ENCODE measurements at regions of chr10 and their contacts with region 1.

Region 1: DNA sequence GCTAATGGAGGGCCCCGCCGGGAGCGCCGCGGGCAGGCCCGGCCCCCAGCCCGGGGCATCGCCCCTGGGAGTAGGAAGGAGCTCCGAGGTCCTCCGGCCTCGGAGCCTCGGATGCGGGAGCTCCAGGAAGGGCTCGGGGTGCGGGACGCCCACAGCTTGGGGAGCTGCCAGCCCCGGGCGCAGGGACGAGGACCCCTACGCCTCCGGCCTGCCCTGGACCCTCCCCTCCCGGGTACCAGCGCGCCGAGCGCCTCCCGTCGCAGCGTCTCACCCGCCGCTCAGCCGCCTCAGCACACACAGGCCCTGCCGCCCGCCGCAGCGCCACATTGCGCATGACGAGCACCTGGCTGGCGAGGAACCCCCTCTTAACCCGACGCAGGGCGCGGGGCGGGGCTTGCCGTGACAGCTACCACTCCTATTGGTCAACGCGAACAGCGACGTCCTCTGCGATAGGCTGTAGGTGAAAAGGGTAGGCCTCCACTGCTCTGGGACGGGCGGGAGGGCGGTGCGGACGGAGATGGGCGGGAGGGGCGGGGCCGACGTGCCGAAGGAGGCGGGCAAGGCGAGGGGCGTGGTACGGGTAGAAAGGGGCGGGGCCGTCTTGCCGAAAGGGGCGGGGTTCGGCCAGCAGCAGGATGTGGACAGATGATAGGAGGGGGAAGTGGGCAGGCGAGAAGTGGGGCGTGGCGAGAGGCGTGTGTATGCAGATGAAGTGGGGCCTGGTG is at the start of gene PITRM1:
- DNase-seq: peak; percentile 100
- H3K4me3 ChIP-seq: peak within 1 kb of the TSS; percentile 99
- H3K4me3 Mint-ChIP-seq: peak within 1 kb of the TSS; percentile 79
- H3K27ac Mint-ChIP-seq: peak within 1 kb of the TSS; percentile 81
- H3K4me1 ChIP-seq: peaks cover 5% of the 10 kb centered on the region; the same call in 1 of the 2 replicates
- H3K4me1 Mint-ChIP-seq: peaks cover 8% of the 10 kb centered on the region
- H3K27me3 ChIP-seq: no peaks in the 10 kb centered on the region
- H3K27me3 Mint-ChIP-seq: peaks cover 6% of the 10 kb centered on the region
- CTCF ChIP-seq: no peak
- total RNA-seq, gene PITRM1: 80.5 and 85.4 TPM in 2 replicates

Region 2: DNA sequence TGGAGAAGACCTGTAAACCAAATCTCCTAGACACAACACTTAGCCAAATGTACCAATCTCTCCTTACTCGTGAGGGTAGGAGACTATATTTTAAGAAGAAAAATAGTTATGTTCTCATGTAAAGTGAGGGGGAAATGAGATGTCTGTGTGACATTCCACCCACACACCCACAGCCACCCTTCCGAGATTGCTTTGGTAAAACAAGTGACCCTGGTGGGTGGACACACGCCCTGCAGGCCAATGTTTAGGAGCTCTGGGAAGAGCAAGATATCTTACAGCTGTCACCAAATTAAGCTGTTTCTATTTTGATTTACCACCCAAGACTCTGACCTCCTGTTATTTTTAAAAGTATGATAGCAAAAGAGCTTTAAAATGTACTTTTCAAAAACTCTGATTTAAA is 252.4 kb before region 1 on chr10:
- CTCF ChIA-PET with region 1: no interaction called
- POLR2A ChIA-PET with region 1: interaction called, 15 read pairs
- intact Hi-C with region 1: no loop called
- DNase-seq: no peak
- H3K4me3 ChIP-seq: no peak overlapping the region
- H3K4me3 Mint-ChIP-seq: no peak overlapping the region
- H3K27ac Mint-ChIP-seq: no peak overlapping the region
- H3K4me1 ChIP-seq: no peaks in the 10 kb centered on the region
- H3K4me1 Mint-ChIP-seq: no peaks in the 10 kb centered on the region
- H3K27me3 ChIP-seq: no peaks in the 10 kb centered on the region; the same call in 1 of the 2 replicates
- H3K27me3 Mint-ChIP-seq: peaks cover 21% of the 10 kb centered on the region
- CTCF ChIP-seq: no peak

Region 3: GRCh38 chr10:3068201-3068967 is 104.2 kb before region 1 on chr10:
- CTCF ChIA-PET with region 1: no interaction called
- POLR2A ChIA-PET with region 1: no interaction called
- intact Hi-C with region 1: loop called (anchors 2 kb)
- DNase-seq: peak; percentile 67 to 76
- H3K4me3 ChIP-seq: peak overlapping the region; percentile 97
- H3K4me3 Mint-ChIP-seq: peak overlapping the region; percentile 95
- H3K27ac Mint-ChIP-seq: peak overlapping the region; percentile 64
- H3K4me1 ChIP-seq: peaks cover 31% of the 10 kb centered on the region
- H3K4me1 Mint-ChIP-seq: peaks cover 34% of the 10 kb centered on the region
- H3K27me3 ChIP-seq: no peaks in the 10 kb centered on the region
- H3K27me3 Mint-ChIP-seq: no peaks in the 10 kb centered on the region
- CTCF ChIP-seq: peak; percentile 20 to 41

Region 4: GRCh38 chr10:3095373-3096139 is 77.1 kb before region 1 on chr10:
- CTCF ChIA-PET with region 1: interaction called, 3 read pairs
- POLR2A ChIA-PET with region 1: interaction called, 14 read pairs
- intact Hi-C with region 1: loop called (anchors 1 kb)
- DNase-seq: peak; percentile 78 to 82
- H3K4me3 ChIP-seq: 0 out of 2 replicates have a peak overlapping the region, but pooled peaks have one; percentile 11
- H3K4me3 Mint-ChIP-seq: peak overlapping the region; percentile 63
- H3K27ac Mint-ChIP-seq: peak overlapping the region; percentile 96
- H3K4me1 ChIP-seq: peaks cover 74% of the 10 kb centered on the region
- H3K4me1 Mint-ChIP-seq: peaks cover 56% of the 10 kb centered on the region
- H3K27me3 ChIP-seq: no peaks in the 10 kb centered on the region
- H3K27me3 Mint-ChIP-seq: no peaks in the 10 kb centered on the region
- CTCF ChIP-seq: no peak

Region 5: GRCh38 chr10:3131094-3131493 is 41.5 kb before region 1 on chr10:
- CTCF ChIA-PET with region 1: no interaction called
- POLR2A ChIA-PET with region 1: no interaction called
- intact Hi-C with region 1: loop called (anchors 2 kb)
- DNase-seq: peak; percentile 72 to 79
- H3K4me3 ChIP-seq: no peak overlapping the region
- H3K4me3 Mint-ChIP-seq: no peak overlapping the region
- H3K27ac Mint-ChIP-seq: peak overlapping the region; percentile 75
- H3K4me1 ChIP-seq: peaks cover 12% of the 10 kb centered on the region
- H3K4me1 Mint-ChIP-seq: peaks cover 6% of the 10 kb centered on the region
- H3K27me3 ChIP-seq: no peaks in the 10 kb centered on the region
- H3K27me3 Mint-ChIP-seq: no peaks in the 10 kb centered on the region
- CTCF ChIP-seq: no peak

Region 6: DNA sequence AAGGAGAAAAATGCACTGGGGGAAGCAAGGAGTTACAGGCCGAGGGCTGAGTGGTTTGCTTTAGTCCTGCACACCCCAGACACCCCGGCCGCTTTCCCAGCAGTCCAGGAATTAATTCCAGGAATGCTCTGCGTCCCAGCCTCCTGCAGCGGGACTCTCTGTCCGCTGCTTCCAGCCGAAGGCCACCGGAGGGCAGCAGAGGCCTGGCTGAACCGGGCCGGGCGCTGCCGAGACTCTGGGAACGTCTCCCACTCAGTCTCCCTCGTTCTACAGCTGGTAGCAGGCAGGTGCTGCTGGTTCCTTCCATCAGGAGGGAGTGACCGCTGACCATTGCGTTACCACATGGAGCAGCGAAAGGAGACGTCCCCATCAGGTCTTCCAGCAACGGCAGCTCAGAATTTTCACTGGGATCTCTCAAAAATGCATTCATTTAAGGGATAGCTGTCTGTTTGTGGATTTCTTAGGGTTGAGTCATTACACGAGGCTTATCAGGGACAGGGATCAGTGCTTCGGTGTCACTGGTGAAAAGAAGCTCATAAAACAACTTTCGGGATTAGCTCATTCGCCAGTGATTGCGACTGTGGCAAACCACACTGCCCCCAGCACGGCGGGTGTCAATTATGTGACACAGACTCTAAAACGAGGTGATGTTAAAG is 24.9 kb after region 1 on chr10:
- CTCF ChIA-PET with region 1: interaction called, 9 read pairs
- POLR2A ChIA-PET with region 1: interaction called, 11 read pairs
- intact Hi-C with region 1: no loop called
- DNase-seq: peak; percentile 89 to 92
- H3K4me3 ChIP-seq: peak overlapping the region; percentile 9
- H3K4me3 Mint-ChIP-seq: peak overlapping the region; percentile 75
- H3K27ac Mint-ChIP-seq: peak overlapping the region; percentile 66
- H3K4me1 ChIP-seq: no peaks in the 10 kb centered on the region
- H3K4me1 Mint-ChIP-seq: peaks cover 9% of the 10 kb centered on the region
- H3K27me3 ChIP-seq: no peaks in the 10 kb centered on the region; the same call in 1 of the 2 replicates
- H3K27me3 Mint-ChIP-seq: peaks cover 6% of the 10 kb centered on the region
- CTCF ChIP-seq: peak; percentile 92 to 99

Region 7: GRCh38 chr10:3213208-3213607 is 40.6 kb after region 1 on chr10:
- CTCF ChIA-PET with region 1: no interaction called
- POLR2A ChIA-PET with region 1: no interaction called
- intact Hi-C with region 1: no loop called
- DNase-seq: no peak
- H3K4me3 ChIP-seq: no peak overlapping the region
- H3K4me3 Mint-ChIP-seq: no peak overlapping the region
- H3K27ac Mint-ChIP-seq: no peak overlapping the region
- H3K4me1 ChIP-seq: no peaks in the 10 kb centered on the region
- H3K4me1 Mint-ChIP-seq: peaks cover 6% of the 10 kb centered on the region
- H3K27me3 ChIP-seq: no peaks in the 10 kb centered on the region
- H3K27me3 Mint-ChIP-seq: peaks cover 5% of the 10 kb centered on the region
- CTCF ChIP-seq: no peak